WTC11 (cell line): ENCODE measurements at regions of chr1 and their contacts with region 1.

Region 1: GRCh38 chr1:37951041-37951782 is 4.4 kb upstream of the INPP5B start:
- DNase-seq: no peak
- ATAC-seq: no peak
- H3K4me3 Mint-ChIP-seq: no peak overlapping the region
- H3K27ac Mint-ChIP-seq: peak overlapping the region; percentile 45; the same call in 1 of the 2 replicates
- H3K4me1 Mint-ChIP-seq: peaks cover 12% of the 10 kb centered on the region
- H3K27me3 Mint-ChIP-seq: no peaks in the 10 kb centered on the region
- CTCF ChIP-seq: no peak

Region 2: GRCh38 chr1:37919277-37919676 is 31.9 kb before region 1 on chr1:
- CTCF ChIA-PET with region 1: no interaction called
- POLR2A ChIA-PET with region 1: no interaction called
- DNase-seq: peak; percentile 41
- ATAC-seq: peak; percentile 90
- H3K4me3 Mint-ChIP-seq: no peak overlapping the region
- H3K27ac Mint-ChIP-seq: no peak overlapping the region
- H3K4me1 Mint-ChIP-seq: no peaks in the 10 kb centered on the region
- H3K27me3 Mint-ChIP-seq: no peaks in the 10 kb centered on the region
- CTCF ChIP-seq: no peak

Region 3: GRCh38 chr1:37931361-37932158 is 19.7 kb before region 1 on chr1:
- CTCF ChIA-PET with region 1: interaction called, 15 read pairs
- POLR2A ChIA-PET with region 1: interaction called, 5 read pairs
- DNase-seq: peak; percentile 99
- ATAC-seq: peak; percentile 98
- H3K4me3 Mint-ChIP-seq: peak overlapping the region; percentile 94
- H3K27ac Mint-ChIP-seq: peak overlapping the region; percentile 87
- H3K4me1 Mint-ChIP-seq: peaks cover 17% of the 10 kb centered on the region
- H3K27me3 Mint-ChIP-seq: no peaks in the 10 kb centered on the region
- CTCF ChIP-seq: no peak

Region 4: GRCh38 chr1:38045431-38046332 is 94.5 kb after region 1 on chr1:
- CTCF ChIA-PET with region 1: no interaction called
- POLR2A ChIA-PET with region 1: no interaction called
- DNase-seq: peak; percentile 61
- ATAC-seq: peak; percentile 11
- H3K4me3 Mint-ChIP-seq: peak overlapping the region; percentile 74
- H3K27ac Mint-ChIP-seq: no peak overlapping the region
- H3K4me1 Mint-ChIP-seq: peaks cover 47% of the 10 kb centered on the region
- H3K27me3 Mint-ChIP-seq: peaks cover 53% of the 10 kb centered on the region
- CTCF ChIP-seq: no peak